A673 (cell line): ENCODE measurements at regions of chr7 and their contacts with region 1.

Region 1: DNA sequence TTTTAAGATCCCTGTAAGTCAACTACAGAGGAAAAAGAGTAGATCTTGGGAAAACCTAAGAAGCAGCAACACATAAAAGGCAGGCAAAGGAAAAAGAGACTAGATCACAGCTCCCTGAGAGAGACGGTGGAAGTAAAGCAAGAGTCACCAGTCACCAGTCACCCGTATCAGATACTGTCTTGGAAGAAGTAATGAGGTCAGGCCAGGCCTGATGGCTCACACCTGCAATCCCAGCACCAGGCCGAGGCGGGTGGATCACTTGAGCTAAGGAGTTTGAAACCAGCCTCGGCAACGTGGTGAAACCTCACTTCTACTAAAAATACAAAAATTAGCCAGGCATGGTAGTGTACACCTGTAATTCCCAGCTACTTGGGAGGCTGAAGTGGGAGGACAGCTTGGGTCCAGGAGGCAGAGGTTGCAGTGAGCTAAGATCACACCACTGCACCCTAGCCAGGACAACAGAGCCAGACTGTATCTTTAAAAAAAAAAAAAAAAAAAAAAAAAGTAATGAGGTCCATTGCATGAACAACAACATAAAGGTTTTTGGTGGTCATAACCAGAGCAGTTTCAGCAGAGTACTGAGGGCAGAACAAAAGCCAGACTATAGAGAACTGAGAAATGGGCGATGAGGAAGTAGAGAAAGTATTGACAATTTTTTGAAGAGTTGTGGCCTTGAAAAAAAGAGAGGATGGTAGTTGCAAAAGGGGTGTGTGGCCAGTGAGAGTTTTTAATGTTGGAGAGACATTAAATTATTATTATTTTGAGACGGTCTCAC is 16.9 kb downstream of the ZNF713 start:
- DNase-seq: no peak
- H3K4me3 ChIP-seq: no peak overlapping the region
- H3K27ac ChIP-seq: no peak overlapping the region
- H3K4me1 ChIP-seq: no peaks in the 10 kb centered on the region
- H3K27me3 ChIP-seq: no peaks in the 10 kb centered on the region
- CTCF ChIP-seq: no peak

Region 2: DNA sequence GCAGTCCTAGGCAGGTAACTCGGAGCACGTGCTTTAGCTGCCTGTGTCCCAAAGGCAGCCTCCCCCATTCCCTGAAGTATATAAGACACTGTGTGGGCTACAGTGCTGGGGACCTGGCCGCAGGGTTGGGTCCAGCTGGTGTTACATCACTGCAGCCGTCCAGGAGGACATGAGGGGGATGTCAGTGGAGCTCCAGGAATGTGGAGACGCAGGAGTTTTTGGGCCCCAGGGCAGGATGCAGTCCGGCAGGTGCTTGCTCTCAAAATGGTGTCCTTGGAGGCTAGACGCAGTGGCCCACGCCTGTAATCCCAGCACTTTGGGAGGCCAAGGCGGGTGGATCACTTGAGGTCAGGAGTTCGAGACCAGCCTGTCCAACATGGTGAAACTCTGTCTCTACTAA is 28.9 kb before region 1 on chr7:
- CTCF ChIA-PET with region 1: no interaction called
- POLR2A ChIA-PET with region 1: no interaction called
- intact Hi-C with region 1: no loop called
- DNase-seq: no peak
- H3K4me3 ChIP-seq: no peak overlapping the region
- H3K27ac ChIP-seq: no peak overlapping the region
- H3K4me1 ChIP-seq: no peaks in the 10 kb centered on the region
- H3K27me3 ChIP-seq: no peaks in the 10 kb centered on the region
- CTCF ChIP-seq: no peak

Region 3: DNA sequence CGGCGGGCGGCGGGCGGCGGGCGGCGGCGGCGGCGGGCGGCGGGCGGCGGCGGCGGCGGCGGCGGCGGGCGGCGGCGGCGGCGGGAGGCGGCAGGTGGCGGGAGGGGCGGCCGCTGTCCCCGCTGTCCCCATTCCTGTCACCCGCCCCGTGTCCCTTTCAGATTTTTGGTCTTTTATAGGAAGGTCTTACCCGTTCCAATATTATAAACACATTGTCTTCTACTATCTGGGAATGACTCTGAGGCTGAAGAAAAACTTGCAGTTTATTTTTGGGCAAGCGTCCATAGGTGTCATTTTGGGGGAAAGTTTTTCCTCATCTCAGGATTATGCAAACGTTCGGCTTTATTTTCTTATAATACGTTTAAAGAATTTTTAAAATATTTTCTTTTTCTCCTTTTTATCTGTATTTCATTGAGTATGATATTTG is 16.3 kb before region 1 on chr7:
- CTCF ChIA-PET with region 1: no interaction called
- POLR2A ChIA-PET with region 1: interaction called, 14 read pairs
- intact Hi-C with region 1: no loop called
- DNase-seq: peak; percentile 17
- H3K4me3 ChIP-seq: peak overlapping the region; percentile 55
- H3K27ac ChIP-seq: peak overlapping the region; percentile 61
- H3K4me1 ChIP-seq: no peaks in the 10 kb centered on the region
- H3K27me3 ChIP-seq: no peaks in the 10 kb centered on the region
- CTCF ChIP-seq: no peak